Activated CD8-positive, alpha-beta memory T cell treated with anti-CD3 and anti-CD28 coated beads, Interleukin-2, amount 10 ng/mL, durations not matched to agents 7 days and 5 days (primary cell): ENCODE measurements at regions of chr5 and their contacts with region 1.

Region 1: GRCh38 chr5:188488-189481 is 2.5 kb upstream of the LRRC14B start:
- DNase-seq: peak; percentile 93
- ATAC-seq: peak; percentile 98
- H3K4me3 Mint-ChIP-seq: no peak overlapping the region
- H3K27ac Mint-ChIP-seq: no peak overlapping the region
- H3K4me1 Mint-ChIP-seq: peaks cover 13% of the 10 kb centered on the region
- H3K27me3 Mint-ChIP-seq: peaks cover 11% of the 10 kb centered on the region

Region 2: GRCh38 chr5:217860-218456 is 29.2 kb after region 1 on chr5 and contains the starts of genes CCDC127 and SDHA:
- CTCF ChIA-PET with region 1: interaction called, 21 read pairs
- DNase-seq: peak; percentile 98
- ATAC-seq: peak; percentile 92
- H3K4me3 Mint-ChIP-seq: peak within 1 kb of the TSS; percentile 87
- H3K27ac Mint-ChIP-seq: peak within 1 kb of the TSS; percentile 96
- H3K4me1 Mint-ChIP-seq: peaks cover 47% of the 10 kb centered on the region
- H3K27me3 Mint-ChIP-seq: no peaks in the 10 kb centered on the region
- total RNA-seq, gene CCDC127: 4.8 to 6.2 TPM
- total RNA-seq, gene SDHA: 201 TPM